Activated CD8-positive, alpha-beta T cell treated with anti-CD3 and anti-CD28 coated beads for 36 hours (primary cell): ENCODE measurements at regions of chr3 and their contacts with region 1.

Region 1: GRCh38 chr3:45043728-45044299 is 17.7 kb downstream of the CLEC3B start:
- DNase-seq: no peak
- ATAC-seq: no peak
- H3K4me3 Mint-ChIP-seq: no peak overlapping the region
- H3K27ac Mint-ChIP-seq: no peak overlapping the region
- H3K4me1 Mint-ChIP-seq: peaks cover 15% of the 10 kb centered on the region
- H3K27me3 Mint-ChIP-seq: peaks cover 7% of the 10 kb centered on the region
- CTCF ChIP-seq: no peak

Region 2: DNA sequence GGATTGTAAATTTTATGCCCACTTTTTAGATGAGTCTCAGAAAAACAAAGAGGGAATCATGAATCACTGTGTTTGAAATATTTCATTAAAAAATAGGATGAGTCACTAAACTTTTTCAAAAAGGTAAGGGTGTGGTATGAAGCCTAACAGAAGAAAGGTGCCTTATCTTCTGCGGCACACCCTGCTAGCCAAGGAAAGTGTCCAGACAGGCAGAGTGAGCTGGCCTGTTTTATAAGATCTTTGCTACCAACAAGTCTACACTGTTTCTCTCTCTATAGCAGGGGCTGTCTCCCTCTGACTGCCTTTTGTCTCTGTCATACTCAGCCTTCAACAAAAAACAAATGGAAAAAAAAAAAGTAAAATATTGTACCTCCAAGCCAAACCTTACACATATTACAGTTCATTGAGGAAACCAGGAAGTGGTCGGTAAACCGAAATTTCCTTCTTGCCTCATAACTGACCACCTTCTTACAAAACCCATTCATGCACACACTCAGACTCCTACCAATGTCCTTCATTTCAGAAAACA is 77.0 kb before region 1 on chr3:
- CTCF ChIA-PET with region 1: no interaction called
- POLR2A ChIA-PET with region 1: no interaction called
- intact Hi-C with region 1: no loop called
- DNase-seq: no peak
- ATAC-seq: peak; percentile 57
- H3K4me3 Mint-ChIP-seq: no peak overlapping the region
- H3K27ac Mint-ChIP-seq: no peak overlapping the region
- H3K4me1 Mint-ChIP-seq: peaks cover 68% of the 10 kb centered on the region
- H3K27me3 Mint-ChIP-seq: no peaks in the 10 kb centered on the region
- CTCF ChIP-seq: no peak

Region 3: DNA sequence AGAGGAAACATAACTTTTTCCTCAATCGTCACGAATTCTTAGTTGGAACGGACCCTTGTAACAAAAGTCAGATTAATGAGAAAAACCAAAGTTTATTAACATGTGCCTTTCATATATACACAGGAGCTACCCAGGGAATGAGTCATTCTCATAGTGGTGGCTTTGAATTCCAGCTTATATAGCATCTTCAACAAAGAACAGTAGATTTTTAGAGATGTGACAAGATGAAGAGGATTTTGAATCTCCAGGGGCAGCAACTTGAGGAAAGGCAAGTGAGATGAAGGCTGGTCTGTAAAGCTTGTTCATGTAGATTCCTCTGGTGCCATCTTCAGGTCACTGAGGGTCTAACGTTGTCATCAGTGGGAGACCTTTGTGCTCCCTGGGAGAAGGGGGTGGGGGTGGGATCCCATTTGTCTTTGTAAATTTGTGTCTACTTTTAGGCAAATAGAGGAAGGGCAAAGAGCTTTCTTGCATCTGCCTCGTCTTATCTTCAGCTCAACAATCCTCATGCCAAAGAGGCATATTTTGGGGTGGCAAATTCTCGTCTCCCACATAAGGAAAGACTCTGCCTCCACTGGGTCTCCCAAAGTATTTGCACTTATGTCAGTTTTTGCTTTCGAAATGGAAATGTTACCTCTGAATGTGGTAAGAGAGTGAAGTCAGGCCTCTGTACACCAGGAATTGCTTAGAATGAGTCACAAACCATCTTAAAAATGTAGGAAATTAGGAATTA is 11.8 kb after region 1 on chr3:
- CTCF ChIA-PET with region 1: interaction called, 66 read pairs
- POLR2A ChIA-PET with region 1: no interaction called
- intact Hi-C with region 1: no loop called
- DNase-seq: peak; percentile 42
- ATAC-seq: peak; percentile 39
- H3K4me3 Mint-ChIP-seq: no peak overlapping the region
- H3K27ac Mint-ChIP-seq: no peak overlapping the region
- H3K4me1 Mint-ChIP-seq: peaks cover 14% of the 10 kb centered on the region
- H3K27me3 Mint-ChIP-seq: peaks cover 11% of the 10 kb centered on the region
- CTCF ChIP-seq: peak; percentile 34

Region 4: GRCh38 chr3:45064512-45065372 is 20.9 kb after region 1 on chr3:
- CTCF ChIA-PET with region 1: interaction called, 13 read pairs
- POLR2A ChIA-PET with region 1: no interaction called
- intact Hi-C with region 1: no loop called
- DNase-seq: peak; percentile 82
- ATAC-seq: peak; percentile 83
- H3K4me3 Mint-ChIP-seq: peak overlapping the region; percentile 28
- H3K27ac Mint-ChIP-seq: peak overlapping the region; percentile 73
- H3K4me1 Mint-ChIP-seq: peaks cover 26% of the 10 kb centered on the region
- H3K27me3 Mint-ChIP-seq: peaks cover 1% of the 10 kb centered on the region
- CTCF ChIP-seq: no peak

Region 5: GRCh38 chr3:45109771-45110508 is 66.1 kb after region 1 on chr3:
- CTCF ChIA-PET with region 1: interaction called, 15 read pairs
- POLR2A ChIA-PET with region 1: no interaction called
- intact Hi-C with region 1: no loop called
- DNase-seq: peak; percentile 48
- ATAC-seq: peak; percentile 55
- H3K4me3 Mint-ChIP-seq: no peak overlapping the region
- H3K27ac Mint-ChIP-seq: no peak overlapping the region
- H3K4me1 Mint-ChIP-seq: peaks cover 69% of the 10 kb centered on the region
- H3K27me3 Mint-ChIP-seq: peaks cover 3% of the 10 kb centered on the region
- CTCF ChIP-seq: no peak

Region 6: GRCh38 chr3:45210308-45211041 is 166.7 kb after region 1 on chr3:
- CTCF ChIA-PET with region 1: interaction called, 390 read pairs
- POLR2A ChIA-PET with region 1: no interaction called
- intact Hi-C with region 1: loop called (anchors 2 kb)
- DNase-seq: peak; percentile 83
- ATAC-seq: peak; percentile 94
- H3K4me3 Mint-ChIP-seq: no peak overlapping the region
- H3K27ac Mint-ChIP-seq: no peak overlapping the region
- H3K4me1 Mint-ChIP-seq: peaks cover 6% of the 10 kb centered on the region
- H3K27me3 Mint-ChIP-seq: peaks cover 11% of the 10 kb centered on the region
- CTCF ChIP-seq: peak; percentile 71

Region 7: DNA sequence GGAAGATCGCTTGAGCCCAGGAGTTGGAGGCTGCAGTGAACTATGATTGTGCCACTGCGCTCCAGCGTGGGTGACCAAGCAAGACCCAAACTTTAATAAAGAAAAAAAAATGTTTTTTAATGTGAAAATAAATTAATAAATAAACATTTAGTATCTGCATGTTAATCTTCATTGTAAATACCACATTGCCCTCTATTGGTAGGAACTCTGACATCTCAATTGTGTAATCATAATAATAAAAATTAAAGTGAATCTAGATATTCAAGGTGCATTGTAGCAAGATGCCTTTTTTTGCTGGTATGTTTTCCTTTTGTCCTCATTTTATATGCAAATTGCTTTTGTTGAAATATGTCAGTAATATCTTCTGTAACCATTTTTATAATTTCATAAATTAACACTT is 455.7 kb after region 1 on chr3:
- CTCF ChIA-PET with region 1: interaction called, 5 read pairs
- POLR2A ChIA-PET with region 1: no interaction called
- intact Hi-C with region 1: loop called (anchors 5 kb)
- DNase-seq: no peak
- ATAC-seq: no peak
- H3K4me3 Mint-ChIP-seq: no peak overlapping the region
- H3K27ac Mint-ChIP-seq: no peak overlapping the region
- H3K4me1 Mint-ChIP-seq: peaks cover 22% of the 10 kb centered on the region
- H3K27me3 Mint-ChIP-seq: no peaks in the 10 kb centered on the region
- CTCF ChIP-seq: peak; percentile 24